ENCODE measurements at regions of chr5 and their contacts with region 1.

Region 1: GRCh38 chr5:81233080-81233634 is at the start of gene CKMT2:
- DNase-seq: peak; percentile 33
- ATAC-seq: peak; percentile 94
- H3K4me3 ChIP-seq: peak within 1 kb of the TSS; percentile 43 to 68 (median 53); a peak in 5 of 6 replicates
- H3K27ac ChIP-seq: peak within 1 kb of the TSS; percentile 50
- H3K4me1 ChIP-seq: peaks cover 33% of the 10 kb centered on the region
- H3K27me3 ChIP-seq: no peaks in the 10 kb centered on the region
- CTCF ChIP-seq: no peak
- EP300 ChIP-seq: no peak
- POLR2A ChIP-seq: peak; percentile 46 to 81
- RAD21 ChIP-seq: no peak
- total RNA-seq, gene CKMT2: 0.69 and 1.2 TPM in 2 replicates

Region 2: GRCh38 chr5:81194633-81195333 is 38.4 kb before region 1 on chr5:
- CTCF ChIA-PET with region 1: no interaction called
- POLR2A ChIA-PET with region 1: no interaction called
- in situ Hi-C with region 1: no loop called
- intact Hi-C with region 1: loop called (anchors 1 kb)
- DNase-seq: peak; percentile 5
- ATAC-seq: peak; percentile 90
- H3K4me3 ChIP-seq: no peak overlapping the region
- H3K27ac ChIP-seq: no peak overlapping the region
- H3K4me1 ChIP-seq: no peaks in the 10 kb centered on the region
- H3K27me3 ChIP-seq: no peaks in the 10 kb centered on the region
- CTCF ChIP-seq: peak; percentile 79
- EP300 ChIP-seq: no peak
- POLR2A ChIP-seq: no peak
- RAD21 ChIP-seq: peak; percentile 56

Region 3: DNA sequence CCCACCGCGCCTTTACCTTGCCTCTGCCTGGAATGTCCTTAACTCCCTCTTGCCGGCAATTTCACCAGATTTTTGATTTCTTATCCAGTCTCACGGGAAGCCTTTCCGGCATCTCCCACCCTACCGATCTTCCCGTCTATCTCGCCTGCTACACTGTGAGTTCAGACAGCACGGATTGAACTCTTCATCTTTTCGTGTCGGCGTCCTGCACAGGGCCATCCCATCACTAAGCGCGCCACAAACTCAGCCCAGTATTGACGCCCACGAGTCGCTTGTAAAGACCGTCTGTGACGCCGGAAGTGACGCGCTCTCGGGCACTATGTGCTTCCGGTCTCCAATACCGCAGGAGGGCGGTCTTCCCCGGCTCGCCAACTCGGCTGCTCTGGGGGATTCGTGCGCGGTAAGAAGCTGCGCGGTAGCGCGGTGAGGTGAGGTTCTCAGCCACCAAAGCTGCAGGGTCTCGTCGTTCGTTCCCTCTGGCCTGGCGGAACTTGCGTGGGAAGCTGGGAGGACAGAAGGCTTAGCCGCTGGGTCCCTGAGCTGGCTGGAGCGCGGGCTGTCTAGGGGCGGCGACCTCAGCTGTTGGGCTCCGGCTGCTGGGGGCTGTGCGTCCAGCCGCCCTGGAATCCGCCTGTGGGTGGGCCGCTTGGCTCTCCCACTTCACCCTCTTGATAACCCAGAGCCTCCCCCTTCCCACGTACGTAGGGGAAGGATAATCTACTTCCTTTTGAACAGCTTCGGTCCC is 68.3 kb after region 1 on chr5 and contains the start of gene ZCCHC9:
- CTCF ChIA-PET with region 1: no interaction called
- POLR2A ChIA-PET with region 1: interaction called, 5 read pairs
- in situ Hi-C with region 1: no loop called
- intact Hi-C with region 1: loop called (anchors 5 kb)
- DNase-seq: peak; percentile 90
- ATAC-seq: peak; percentile 96
- H3K4me3 ChIP-seq: peak within 1 kb of the TSS; percentile 93 to 95 (median 94)
- H3K27ac ChIP-seq: peak within 1 kb of the TSS; percentile 89
- H3K4me1 ChIP-seq: peaks cover 35% of the 10 kb centered on the region
- H3K27me3 ChIP-seq: no peaks in the 10 kb centered on the region; a peak in 1 of 5 replicates
- CTCF ChIP-seq: peak; percentile 84
- EP300 ChIP-seq: no peak; a peak in 1 of 4 replicates
- POLR2A ChIP-seq: peak; percentile 94 to 97
- RAD21 ChIP-seq: peak; percentile 43; the same call in 1 of the 2 replicates
- total RNA-seq, gene ZCCHC9: 52.5 and 70.7 TPM in 2 replicates